Tibial artery (tissue), 4 donors: ENCODE measurements at regions of chr12 and their contacts with region 1.

Region 1: GRCh38 chr12:122951979-122952892 is 14.0 kb downstream of the ABCB9 start:
- DNase-seq: peak; percentile 73 to 83
- H3K4me3 ChIP-seq: no peak overlapping the region
- H3K27ac ChIP-seq: no peak overlapping the region
- H3K4me1 ChIP-seq: peaks cover under 1 to 9% (median 4%) of the 10 kb centered on the region in 4 donors
- H3K27me3 ChIP-seq: no peaks in the 10 kb centered on the region
- CTCF ChIP-seq: peak; percentile 89 to 91

Region 2: GRCh38 chr12:122793685-122794106 is 158.5 kb before region 1 on chr12:
- intact Hi-C with region 1: loop called (anchors 2 kb)
- DNase-seq: no peak
- H3K4me3 ChIP-seq: no peak overlapping the region
- H3K27ac ChIP-seq: no peak overlapping the region
- H3K4me1 ChIP-seq: no peaks in the 10 kb centered on the region
- H3K27me3 ChIP-seq: no peaks in the 10 kb centered on the region
- CTCF ChIP-seq: peak; percentile 63 to 69

Region 3: GRCh38 chr12:122860346-122861090 is 91.7 kb before region 1 on chr12:
- intact Hi-C with region 1: loop called (anchors 1 kb)
- DNase-seq: peak; percentile 81 to 89
- H3K4me3 ChIP-seq: no peak overlapping the region
- H3K27ac ChIP-seq: no peak overlapping the region
- H3K4me1 ChIP-seq: peaks cover 0 to 32% (median 4%) of the 10 kb centered on the region in 4 donors
- H3K27me3 ChIP-seq: no peaks in the 10 kb centered on the region
- CTCF ChIP-seq: peak; percentile 93 to 96

Region 4: GRCh38 chr12:122984612-122985337 is 32.5 kb after region 1 on chr12:
- intact Hi-C with region 1: no loop called
- DNase-seq: no peak
- H3K4me3 ChIP-seq: peak overlapping the region; percentile 7 to 24
- H3K27ac ChIP-seq: peak overlapping the region; percentile 96 to 98
- H3K4me1 ChIP-seq: peaks cover 11 to 53% (median 50%) of the 10 kb centered on the region in 4 donors
- H3K27me3 ChIP-seq: no peaks in the 10 kb centered on the region
- CTCF ChIP-seq: no peak